ENCODE measurements at regions of chr10 and their contacts with region 1.

Region 1: DNA sequence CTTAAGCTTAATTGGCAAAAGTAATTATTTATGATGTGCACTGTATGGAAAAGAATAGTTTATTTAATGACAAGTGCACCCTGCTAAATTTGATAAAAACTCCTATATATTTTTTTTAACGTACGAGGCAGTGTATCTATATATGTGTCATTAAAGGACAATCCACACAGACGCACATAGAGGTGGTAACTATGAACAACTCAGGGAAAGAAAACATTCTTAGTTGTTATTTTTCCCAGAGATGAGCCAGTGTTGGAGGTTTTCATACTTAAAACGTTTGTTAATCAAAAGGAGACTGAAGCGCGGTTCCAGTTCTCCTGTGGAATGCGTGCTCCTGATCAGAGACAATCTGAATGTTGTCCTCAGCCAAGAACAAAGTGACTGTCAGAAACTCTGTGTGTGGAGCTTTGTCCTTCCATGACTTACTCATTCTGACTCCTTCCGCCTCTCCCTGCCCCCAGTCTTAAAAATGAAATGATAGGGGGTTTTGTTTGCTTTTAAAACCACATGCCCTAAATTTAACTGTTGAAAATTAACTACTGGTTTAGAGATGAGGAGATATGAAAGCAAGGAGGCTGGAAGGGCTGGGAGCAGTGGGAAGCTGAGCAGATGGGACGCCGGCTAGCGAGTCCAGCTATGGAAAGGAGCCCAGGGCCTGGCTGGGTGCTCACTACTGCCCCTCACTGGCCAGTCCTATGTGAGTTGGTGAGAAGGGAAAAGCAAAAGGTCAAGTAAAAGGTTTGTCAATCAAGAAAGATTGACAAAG is 99.6 kb downstream of the SVIL start:
- DNase-seq: peak in 1 of 2 experiments; percentile 87
- H3K4me3 ChIP-seq: no peak overlapping the region
- H3K27ac ChIP-seq: no peak overlapping the region
- H3K4me1 ChIP-seq: peaks cover 1 to 8% (median 7%) of the 10 kb centered on the region in 4 experiments; a peak in 6 of 7 replicates
- H3K27me3 ChIP-seq: no peaks in the 10 kb centered on the region
- CTCF ChIP-seq: peak; percentile 69 to 85 (median 81)
- EP300 ChIP-seq: no peak
- POLR2A ChIP-seq: no peak
- RAD21 ChIP-seq: peak; percentile 26 to 50; a peak in 3 of 4 replicates

Region 2: GRCh38 chr10:29517352-29517923 is 17.8 kb before region 1 on chr10:
- CTCF ChIA-PET with region 1: interaction called, 34 read pairs
- POLR2A ChIA-PET with region 1: no interaction called
- DNase-seq: peak in 1 of 2 experiments; percentile 70
- H3K4me3 ChIP-seq: no peak overlapping the region
- H3K27ac ChIP-seq: no peak overlapping the region
- H3K4me1 ChIP-seq: no peaks in the 10 kb centered on the region
- H3K27me3 ChIP-seq: no peaks in the 10 kb centered on the region
- CTCF ChIP-seq: peak; percentile 30 to 68 (median 62)
- EP300 ChIP-seq: no peak
- POLR2A ChIP-seq: no peak
- RAD21 ChIP-seq: peak in 1 of 2 experiments; percentile 39; a peak in 2 of 4 replicates

Region 3: DNA sequence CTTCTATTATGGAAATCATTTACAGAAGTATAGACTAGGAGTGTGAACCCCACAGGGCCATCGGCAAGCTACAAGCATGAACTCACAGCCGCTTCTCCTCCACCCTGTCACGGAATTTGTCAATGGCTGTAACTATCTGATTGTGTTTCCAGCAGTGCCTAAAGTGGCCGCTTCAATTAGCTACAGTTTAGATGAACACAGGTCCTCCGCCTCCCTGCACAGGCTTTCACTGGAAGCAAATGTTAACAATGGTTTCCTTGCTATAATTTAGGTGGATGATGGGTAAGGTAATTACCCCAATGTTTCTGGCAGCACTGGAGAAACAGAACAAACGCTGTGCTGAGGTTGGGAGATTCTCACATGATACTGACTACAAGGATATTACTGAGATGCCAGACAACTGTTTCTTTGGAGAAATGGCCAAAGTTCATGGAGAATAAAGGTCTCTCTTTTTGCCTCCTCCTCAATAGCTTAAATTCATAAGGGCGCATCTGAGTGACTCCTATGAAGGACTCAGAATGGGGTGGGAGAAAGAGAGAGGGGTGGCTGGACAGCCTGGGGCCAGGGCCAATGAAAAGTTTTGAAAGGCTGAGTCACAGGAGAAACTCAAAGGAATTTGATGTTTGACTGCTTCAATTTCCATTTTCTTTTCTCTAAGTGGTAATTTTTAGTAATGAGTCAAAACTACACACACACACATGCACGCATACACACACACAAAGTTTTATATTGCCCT is 20.7 kb after region 1 on chr10:
- CTCF ChIA-PET with region 1: interaction called, 32 read pairs
- POLR2A ChIA-PET with region 1: interaction called, 3 read pairs
- DNase-seq: no peak
- H3K4me3 ChIP-seq: no peak overlapping the region
- H3K27ac ChIP-seq: no peak overlapping the region
- H3K4me1 ChIP-seq: peaks cover 0 to 8% (median 5%) of the 10 kb centered on the region in 4 experiments; a peak in 3 of 7 replicates
- H3K27me3 ChIP-seq: no peaks in the 10 kb centered on the region
- CTCF ChIP-seq: no peak
- EP300 ChIP-seq: no peak
- POLR2A ChIP-seq: no peak
- RAD21 ChIP-seq: no peak

Region 4: DNA sequence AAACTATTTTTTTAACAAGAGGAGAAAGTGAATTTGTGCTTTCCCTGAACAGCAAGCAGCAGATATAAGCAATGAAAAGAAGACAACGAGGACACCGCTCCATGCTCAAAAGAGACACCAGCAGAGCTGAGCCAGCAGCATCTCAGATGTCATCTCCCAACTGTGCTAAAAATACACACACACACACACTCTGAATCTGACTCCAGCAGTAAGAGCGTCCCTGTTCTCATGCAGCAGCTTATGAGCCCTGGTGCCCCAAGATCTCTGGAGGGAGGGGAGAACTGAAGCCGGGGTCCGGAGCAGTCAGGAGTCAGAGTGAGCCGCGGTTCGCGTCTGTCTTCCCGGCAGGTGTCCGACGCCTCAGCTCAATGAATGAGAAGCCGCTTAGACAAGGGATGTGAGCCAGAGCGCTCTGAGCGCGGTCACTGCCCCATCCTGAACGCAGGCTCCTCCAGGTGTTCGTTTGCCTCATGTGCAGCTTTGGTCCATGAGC is 50.3 kb after region 1 on chr10:
- CTCF ChIA-PET with region 1: interaction called, 13 read pairs
- POLR2A ChIA-PET with region 1: no interaction called
- DNase-seq: peak in 1 of 2 experiments; percentile 62
- H3K4me3 ChIP-seq: no peak overlapping the region
- H3K27ac ChIP-seq: no peak overlapping the region
- H3K4me1 ChIP-seq: peaks cover 9 to 21% (median 17%) of the 10 kb centered on the region in 4 experiments
- H3K27me3 ChIP-seq: no peaks in the 10 kb centered on the region
- CTCF ChIP-seq: peak; percentile 13 to 19 (median 15); a peak in 2 of 4 replicates
- EP300 ChIP-seq: no peak
- POLR2A ChIP-seq: no peak
- RAD21 ChIP-seq: peak; percentile 28 to 29; a peak in 3 of 4 replicates